Dorsolateral prefrontal cortex (tissue), 120 donors: ENCODE measurements at regions of chr2 and their contacts with region 1.

Region 1: DNA sequence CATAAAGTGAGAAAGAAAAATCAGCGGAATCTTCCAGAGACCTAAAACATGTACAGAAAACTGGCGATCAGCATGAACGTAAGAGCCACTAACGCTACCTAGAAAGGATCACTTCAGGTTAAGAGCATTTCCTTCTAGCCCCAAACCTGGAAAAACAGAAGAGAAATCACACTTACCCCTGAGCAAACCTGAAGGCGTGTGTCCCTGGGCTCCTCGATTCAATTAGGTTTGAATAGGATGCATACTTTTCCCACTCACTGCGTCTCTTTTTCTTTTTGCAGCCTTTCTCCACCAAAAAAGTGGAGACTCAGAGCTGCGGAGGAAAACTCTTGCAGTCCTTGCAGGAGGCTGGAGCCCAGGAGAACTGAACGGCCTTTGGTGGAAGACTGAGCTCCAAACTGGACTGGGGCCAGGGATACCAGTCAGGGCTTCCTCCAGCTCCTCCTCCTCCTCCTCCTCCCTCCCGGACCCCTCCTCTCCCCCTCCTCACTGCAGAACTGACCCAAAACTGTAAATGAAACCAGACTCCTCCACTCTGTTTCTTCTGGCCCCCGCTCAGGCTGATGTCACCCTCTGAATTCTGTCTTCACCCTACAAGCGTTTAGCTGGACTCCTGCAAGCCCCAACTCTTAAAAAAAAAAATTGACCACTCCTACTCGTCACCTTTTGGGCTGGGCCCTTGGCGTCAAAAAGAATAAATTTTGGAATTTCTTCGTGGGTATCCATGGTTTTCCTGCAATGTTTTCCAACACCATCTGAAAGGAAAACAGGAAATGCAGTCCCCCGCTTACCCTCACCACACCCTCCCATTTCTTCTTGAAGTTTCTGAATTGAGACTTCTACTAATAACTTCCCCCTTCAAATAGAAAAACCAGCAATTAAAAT is at the start of gene COL6A3:
- DNase-seq: no peak
- H3K4me3 ChIP-seq: peak within 1 kb of the TSS in 20 of 59 donors; percentile 2 to 50 (median 26)
- H3K27ac ChIP-seq: peak within 1 kb of the TSS in 4 of 59 donors; percentile 5 to 61 (median 34)
- H3K27me3 ChIP-seq: peaks cover 0 to 30% (median 5%) of the 10 kb centered on the region in 45 donors
- CTCF ChIP-seq: no peak
- total RNA-seq, gene COL6A3: 0.33 to 9.0 (median 1.7) TPM

Region 2: GRCh38 chr2:237085248-237086221 is 328.5 kb before region 1 on chr2 and contains the start of gene COPS8:
- intact Hi-C with region 1: loop called in 1 of 2 experiments (anchors 5 kb)
- DNase-seq: peak; percentile 90 to 97 (median 94)
- H3K4me3 ChIP-seq: peak within 1 kb of the TSS; percentile 59 to 100 (median 91)
- H3K27ac ChIP-seq: peak within 1 kb of the TSS in 58 of 59 donors; percentile 1 to 92 (median 76)
- H3K27me3 ChIP-seq: no peaks in the 10 kb centered on the region
- CTCF ChIP-seq: peak in 54 of 56 donors; percentile 11 to 76 (median 60)
- total RNA-seq, gene COPS8: 37.8 to 117 (median 92.3) TPM

Region 3: GRCh38 chr2:237154082-237154638 is 259.9 kb before region 1 on chr2:
- intact Hi-C with region 1: loop called (anchors 10 kb)
- DNase-seq: no peak
- H3K4me3 ChIP-seq: no peak overlapping the region
- H3K27ac ChIP-seq: no peak overlapping the region
- H3K27me3 ChIP-seq: peaks cover 0 to 24% (median 0%) of the 10 kb centered on the region in 45 donors
- CTCF ChIP-seq: peak in 49 of 56 donors; percentile 20 to 64 (median 38)

Region 4: DNA sequence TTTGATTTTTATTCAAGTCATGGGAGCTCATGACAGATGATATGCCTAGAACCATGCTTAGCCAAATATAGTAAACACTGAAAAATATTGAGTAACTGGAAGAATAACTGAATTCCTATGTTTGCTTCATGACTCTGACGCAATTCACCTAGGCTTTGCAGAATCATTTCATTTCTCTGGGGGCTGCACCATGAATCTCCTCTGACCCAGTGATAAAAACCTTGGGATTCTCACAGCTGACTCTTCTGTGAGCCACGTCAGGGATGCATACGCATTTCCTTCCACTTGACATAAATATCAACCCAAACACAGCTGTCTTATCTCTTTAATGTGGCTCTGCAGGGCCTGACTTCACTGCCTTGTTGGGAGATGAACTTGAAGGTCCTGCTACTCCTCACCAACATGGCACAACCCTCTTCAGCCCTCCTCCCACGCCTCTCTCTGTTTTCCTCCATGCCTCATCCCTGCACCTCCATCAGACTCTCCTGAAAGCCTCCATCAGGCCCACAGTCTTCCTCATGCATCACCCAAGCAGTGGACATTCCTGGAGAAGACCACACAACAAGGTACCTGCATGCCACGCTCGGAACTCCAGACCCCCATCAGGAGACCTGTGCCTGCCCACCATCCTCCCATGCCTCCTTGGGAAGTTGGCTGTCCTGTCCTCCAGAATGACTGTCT is 29.9 kb before region 1 on chr2:
- intact Hi-C with region 1: no loop called
- DNase-seq: no peak
- H3K4me3 ChIP-seq: no peak overlapping the region
- H3K27ac ChIP-seq: no peak overlapping the region
- H3K27me3 ChIP-seq: no peaks in the 10 kb centered on the region
- CTCF ChIP-seq: no peak

Region 5: GRCh38 chr2:237456200-237456843 is 42.3 kb after region 1 on chr2:
- intact Hi-C with region 1: no loop called
- DNase-seq: no peak
- H3K4me3 ChIP-seq: no peak overlapping the region
- H3K27ac ChIP-seq: no peak overlapping the region
- H3K27me3 ChIP-seq: peaks cover 0 to 8% (median 0%) of the 10 kb centered on the region in 45 donors
- CTCF ChIP-seq: no peak

Region 6: DNA sequence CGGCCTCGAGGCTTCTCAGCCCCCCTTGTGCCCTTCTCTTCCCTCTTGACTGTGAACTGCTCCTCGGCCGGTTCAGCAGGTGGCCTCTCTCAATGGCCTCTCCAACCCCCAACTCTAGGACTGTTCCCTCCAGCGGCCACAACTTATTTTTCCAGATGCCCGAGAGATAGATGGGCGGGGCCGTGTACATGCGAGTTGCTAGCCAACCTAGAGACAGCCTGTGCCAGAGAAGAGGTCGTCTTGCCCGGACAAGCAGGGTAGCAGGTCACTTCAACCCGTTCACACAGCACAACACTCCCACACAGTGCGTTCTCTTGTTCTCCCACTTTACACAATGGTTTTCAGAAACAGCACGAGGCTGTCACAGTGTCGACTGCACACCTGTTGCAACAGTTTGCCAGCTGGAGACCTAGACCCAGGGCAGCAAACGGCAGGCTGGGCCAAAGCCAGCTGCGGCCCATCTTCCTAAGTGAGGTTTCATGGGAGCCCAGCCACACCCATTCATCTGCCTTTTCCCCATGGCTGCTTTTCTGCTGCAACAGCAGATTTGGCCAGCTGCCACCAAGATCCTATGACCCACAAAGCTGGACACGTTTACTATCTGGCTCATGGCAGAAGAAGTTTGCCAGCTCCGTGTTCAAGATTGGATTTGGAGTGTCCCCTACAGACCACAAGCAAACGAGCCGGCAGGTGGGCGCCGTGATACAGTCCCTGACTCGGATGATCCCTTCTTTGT is 145.1 kb after region 1 on chr2:
- intact Hi-C with region 1: no loop called
- DNase-seq: no peak
- H3K4me3 ChIP-seq: no peak overlapping the region
- H3K27ac ChIP-seq: no peak overlapping the region
- H3K27me3 ChIP-seq: peaks cover 0 to 13% (median 0%) of the 10 kb centered on the region in 45 donors
- CTCF ChIP-seq: no peak